Vagina (tissue), 2 donors: ENCODE measurements at regions of chr1 and their contacts with region 1.

Region 1: DNA sequence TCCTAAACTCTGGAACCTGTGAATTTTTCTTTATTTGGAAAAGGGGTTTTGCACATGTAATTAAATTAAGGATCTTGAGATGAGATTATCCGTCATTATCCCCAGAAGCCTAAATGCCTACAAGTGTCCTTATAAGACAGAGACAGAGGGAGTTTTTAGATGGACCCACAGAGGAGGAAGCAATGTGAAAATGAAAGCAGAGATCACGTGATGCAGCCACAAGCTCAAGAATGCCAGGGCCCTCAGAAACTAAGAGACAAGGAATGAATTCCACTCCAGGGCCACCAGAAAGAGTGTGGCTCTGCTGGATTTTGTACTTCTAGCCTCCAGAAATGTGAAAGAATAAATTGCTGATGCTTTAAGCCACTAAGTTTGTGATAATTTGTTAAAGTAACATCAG is 183.6 kb upstream of the UBE2U start:
- DNase-seq: no peak
- H3K4me3 ChIP-seq: peak overlapping the region; percentile 8 to 13
- H3K27ac ChIP-seq: peak overlapping the region; percentile 2
- H3K4me1 ChIP-seq: no peaks in the 10 kb centered on the region
- H3K27me3 ChIP-seq: no peaks in the 10 kb centered on the region
- CTCF ChIP-seq: no peak
- POLR2A ChIP-seq: no peak

Region 2: DNA sequence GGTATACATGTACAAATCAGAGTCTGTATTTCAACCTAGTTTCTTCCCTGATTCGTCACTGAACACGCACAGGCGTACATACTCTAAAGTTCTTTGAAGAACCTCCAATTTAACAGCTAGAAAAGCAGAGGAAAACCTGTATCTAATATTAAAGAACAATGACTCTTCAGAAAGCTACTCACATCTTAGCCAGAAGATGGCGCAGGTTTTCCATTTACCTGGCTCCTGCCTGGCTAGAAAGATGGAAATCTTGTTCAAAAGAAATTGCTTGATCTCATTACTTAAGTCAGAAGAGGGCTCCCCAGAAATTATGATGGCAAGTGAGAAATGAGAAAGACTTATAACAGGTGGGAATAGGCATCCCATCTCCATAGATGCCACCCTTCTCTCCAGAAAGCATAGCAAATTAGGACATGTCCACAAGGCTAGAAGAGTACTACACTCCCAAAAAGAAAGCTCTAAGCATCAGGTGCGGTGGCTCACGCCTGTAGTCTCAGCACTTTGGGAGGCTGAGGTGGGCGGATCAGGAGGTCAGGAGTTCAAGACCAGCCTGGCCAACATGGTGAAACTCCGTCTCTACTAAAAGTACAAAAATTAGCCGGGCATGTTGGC is 1844.1 kb before region 1 on chr1:
- intact Hi-C with region 1: no loop called
- DNase-seq: no peak
- H3K4me3 ChIP-seq: no peak overlapping the region
- H3K27ac ChIP-seq: no peak overlapping the region
- H3K4me1 ChIP-seq: no peaks in the 10 kb centered on the region
- H3K27me3 ChIP-seq: no peaks in the 10 kb centered on the region
- CTCF ChIP-seq: peak in 2 of 3 experiments; percentile 39 to 66
- POLR2A ChIP-seq: no peak

Region 3: DNA sequence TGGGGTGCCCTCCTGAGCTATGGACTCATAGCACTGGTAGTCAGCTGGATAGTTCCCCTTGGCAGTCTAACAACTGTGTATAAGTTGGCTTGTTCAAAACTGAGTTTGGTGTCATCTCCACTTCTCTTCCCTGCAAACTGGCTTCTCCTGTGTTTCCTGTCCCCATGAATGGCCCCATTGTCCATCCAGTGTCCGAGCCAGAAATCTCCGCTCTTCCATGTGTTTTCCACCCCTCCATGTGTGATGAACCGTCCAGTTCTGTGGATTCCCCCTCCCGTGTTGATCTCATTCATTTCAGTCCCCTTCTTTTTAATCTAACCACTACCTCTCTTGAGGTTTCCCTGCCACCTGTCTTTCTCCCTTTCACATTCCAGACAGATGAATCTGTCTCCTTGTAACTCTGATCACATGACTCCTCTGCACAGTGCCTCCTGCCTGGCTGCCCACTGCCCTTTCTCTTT is 50.3 kb before region 1 on chr1:
- intact Hi-C with region 1: loop called (anchors 5 kb)
- DNase-seq: no peak
- H3K4me3 ChIP-seq: no peak overlapping the region
- H3K27ac ChIP-seq: no peak overlapping the region
- H3K4me1 ChIP-seq: peaks cover 15% of the 10 kb centered on the region
- H3K27me3 ChIP-seq: no peaks in the 10 kb centered on the region
- CTCF ChIP-seq: no peak
- POLR2A ChIP-seq: no peak

Region 4: DNA sequence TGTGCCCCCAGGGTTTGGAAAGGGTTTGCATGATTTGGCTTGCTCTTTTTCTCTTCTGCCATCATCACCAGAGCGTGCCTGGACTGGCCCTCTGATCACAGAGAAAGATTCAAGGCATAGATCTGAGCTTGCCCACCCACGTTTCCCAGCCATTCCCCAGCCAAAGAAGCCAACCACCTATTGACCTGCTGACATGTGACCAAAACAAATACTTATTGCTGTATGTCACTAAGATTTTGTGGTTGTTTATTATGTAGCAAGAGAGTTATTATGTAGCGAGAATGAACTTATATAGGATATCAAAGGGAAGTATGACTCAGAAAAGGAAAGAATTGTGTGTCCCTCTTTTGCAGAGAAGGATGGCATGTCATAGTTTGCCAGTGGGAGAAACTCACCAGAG is 243.5 kb after region 1 on chr1:
- intact Hi-C with region 1: no loop called
- DNase-seq: no peak
- H3K4me3 ChIP-seq: no peak overlapping the region
- H3K27ac ChIP-seq: no peak overlapping the region
- H3K4me1 ChIP-seq: peaks cover 7% of the 10 kb centered on the region
- H3K27me3 ChIP-seq: no peaks in the 10 kb centered on the region
- CTCF ChIP-seq: no peak
- POLR2A ChIP-seq: no peak